ENCODE measurements at regions of chr12 and their contacts with region 1.

Region 1: GRCh38 chr12:104189915-104190555 is 25.5 kb upstream of the TXNRD1 start:
- DNase-seq: no peak
- H3K4me3 ChIP-seq: no peak overlapping the region
- H3K4me1 ChIP-seq: no peaks in the 10 kb centered on the region
- H3K27me3 ChIP-seq: no peaks in the 10 kb centered on the region

Region 2: DNA sequence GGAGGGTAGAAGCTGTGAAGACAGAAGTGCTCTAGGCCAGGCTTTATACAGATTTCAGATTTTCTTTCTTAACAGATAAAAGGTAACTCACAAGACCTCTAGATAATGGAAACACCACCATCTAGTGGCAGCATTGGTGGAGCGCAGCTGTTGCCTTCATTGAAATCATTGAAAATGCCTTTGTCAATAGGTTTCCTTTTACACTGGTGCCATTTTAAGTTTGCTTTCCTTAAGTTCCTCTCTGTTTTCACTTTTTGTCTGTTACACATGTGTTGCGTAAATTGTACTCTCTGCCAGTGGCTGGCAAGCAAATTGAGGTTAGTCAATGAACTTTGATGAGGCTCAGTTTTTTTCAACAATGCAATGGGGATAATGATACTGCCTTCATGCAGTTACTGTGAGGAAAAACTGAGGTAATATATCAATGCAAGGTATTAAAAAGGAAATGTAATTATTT is 863.1 kb after region 1 on chr12:
- in situ Hi-C with region 1: loop called (anchors 10 kb)
- DNase-seq: peak; percentile 79 to 81
- H3K4me3 ChIP-seq: no peak overlapping the region
- H3K4me1 ChIP-seq: no peaks in the 10 kb centered on the region
- H3K27me3 ChIP-seq: no peaks in the 10 kb centered on the region